B cell (primary cell): ENCODE measurements at regions of chr9 and their contacts with region 1.

Region 1: DNA sequence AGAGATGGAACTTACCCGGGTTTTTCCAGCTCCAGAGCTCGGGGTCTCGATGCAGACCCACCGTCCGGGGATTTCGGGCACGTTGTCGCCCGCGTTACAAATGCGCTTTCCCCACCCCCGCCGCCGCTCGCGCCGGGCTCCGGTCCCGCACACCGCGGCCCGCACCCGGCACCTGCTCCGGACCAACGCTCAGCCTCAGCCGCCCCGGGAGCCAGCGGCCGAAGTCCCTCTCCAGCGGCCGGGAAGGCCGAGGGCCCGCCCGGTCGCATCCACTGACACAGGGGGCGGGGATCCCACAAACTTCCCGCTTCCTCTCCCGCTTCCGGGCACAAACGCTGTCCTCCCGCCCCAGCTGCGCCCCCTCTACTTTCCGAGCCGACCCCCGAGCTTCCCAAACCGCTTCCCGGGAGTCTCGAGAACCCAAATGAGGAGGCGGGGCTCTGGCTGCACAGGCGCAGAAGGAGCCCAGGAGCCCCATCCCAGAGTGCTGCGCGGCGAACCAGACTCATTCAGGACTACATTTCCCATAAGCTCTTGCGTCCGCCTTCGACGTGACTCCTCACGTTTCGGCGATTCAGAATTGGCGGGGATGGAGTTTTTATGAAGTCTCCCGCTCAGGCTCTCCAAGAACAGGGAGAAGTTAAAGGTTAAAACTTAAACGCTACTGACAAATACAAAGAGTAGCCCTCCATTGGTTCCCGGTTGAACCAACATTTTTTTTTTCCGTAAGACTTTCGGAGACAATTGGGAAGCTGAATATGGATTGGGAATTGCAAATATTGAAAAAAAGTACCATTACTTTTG is at the start of gene ZNF782:
- DNase-seq: peak; percentile 89
- ATAC-seq: peak; percentile 93
- H3K4me3 ChIP-seq: peak within 1 kb of the TSS; percentile 84 to 100 (median 89)
- H3K4me3 Mint-ChIP-seq: peak within 1 kb of the TSS; percentile 98
- H3K27ac ChIP-seq: peak within 1 kb of the TSS; percentile 56 to 82
- H3K27ac Mint-ChIP-seq: peak within 1 kb of the TSS; percentile 97
- H3K4me1 ChIP-seq: peaks cover 12 to 18% of the 10 kb centered on the region in 2 donors
- H3K4me1 Mint-ChIP-seq: peaks cover 39% of the 10 kb centered on the region
- H3K27me3 ChIP-seq: peaks cover 0 to 7% (median 0%) of the 10 kb centered on the region in 4 experiments
- H3K27me3 Mint-ChIP-seq: peaks cover 5% of the 10 kb centered on the region
- CTCF ChIP-seq: no peak
- total RNA-seq, gene ZNF782: 14.6 and 16.3 TPM in 2 replicates

Region 2: DNA sequence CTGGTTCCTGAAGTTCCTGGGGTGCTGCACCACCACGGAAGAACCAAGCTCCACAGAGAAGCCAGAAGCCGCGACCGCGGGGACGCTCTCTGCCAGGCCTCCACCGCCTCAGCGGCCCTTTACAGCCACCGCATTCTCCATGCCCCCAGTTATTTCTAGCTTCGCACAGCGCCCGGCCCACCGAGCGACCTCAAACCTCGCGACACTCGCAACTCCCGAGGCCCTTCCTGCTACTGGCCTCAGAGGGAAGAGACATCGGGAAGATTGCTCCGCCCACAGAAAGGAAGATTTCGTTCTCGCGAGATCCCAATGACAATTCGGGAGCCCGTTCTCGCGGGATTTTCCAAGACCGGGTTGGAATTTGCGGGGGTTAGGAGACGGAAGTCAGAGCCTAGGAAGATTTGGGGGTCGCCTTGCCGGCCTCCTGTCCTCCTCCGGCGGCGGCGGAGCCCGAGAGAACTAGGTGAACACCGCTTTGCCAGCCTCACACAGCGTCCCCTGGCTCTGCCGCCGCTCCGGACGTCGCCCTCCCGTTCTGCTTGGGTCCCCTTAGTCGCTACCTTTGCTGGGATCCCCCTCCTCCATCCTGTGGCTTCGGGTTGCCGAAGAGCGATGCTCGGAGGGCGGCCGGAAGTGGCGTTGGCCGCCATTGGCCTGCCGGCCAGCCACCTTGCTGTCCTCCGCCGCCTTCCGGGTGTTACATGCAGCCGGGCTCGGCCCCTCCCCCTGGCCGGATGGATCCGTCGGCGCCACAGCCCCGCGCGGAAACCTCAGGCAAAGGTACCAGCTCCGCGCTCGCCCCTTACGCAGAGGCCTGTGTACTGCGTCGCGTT is 978.8 kb before region 1 on chr9 and contains the start of gene ERCC6L2:
- CTCF ChIA-PET with region 1: no interaction called
- POLR2A ChIA-PET with region 1: no interaction called
- intact Hi-C with region 1: loop called (anchors 2 kb)
- DNase-seq: peak; percentile 96
- ATAC-seq: peak; percentile 89
- H3K4me3 ChIP-seq: peak within 1 kb of the TSS in 2 of 5 experiments; percentile 76 to 82
- H3K4me3 Mint-ChIP-seq: no peak within 1 kb of the TSS
- H3K27ac ChIP-seq: no peak within 1 kb of the TSS
- H3K27ac Mint-ChIP-seq: no peak within 1 kb of the TSS
- H3K4me1 ChIP-seq: peaks cover 8 to 11% of the 10 kb centered on the region in 2 donors
- H3K4me1 Mint-ChIP-seq: peaks cover 23% of the 10 kb centered on the region
- H3K27me3 ChIP-seq: no peaks in the 10 kb centered on the region
- H3K27me3 Mint-ChIP-seq: no peaks in the 10 kb centered on the region
- CTCF ChIP-seq: no peak
- total RNA-seq, gene ERCC6L2: 52.0 and 54.4 TPM in 2 replicates

Region 3: GRCh38 chr9:96566498-96567207 is 287.6 kb before region 1 on chr9:
- CTCF ChIA-PET with region 1: no interaction called
- POLR2A ChIA-PET with region 1: no interaction called
- intact Hi-C with region 1: loop called (anchors 10 kb)
- DNase-seq: peak; percentile 89
- ATAC-seq: peak; percentile 91
- H3K4me3 ChIP-seq: peak overlapping the region; percentile 36 to 88 (median 74)
- H3K4me3 Mint-ChIP-seq: peak overlapping the region; percentile 92
- H3K27ac ChIP-seq: peak overlapping the region; percentile 84 to 94
- H3K27ac Mint-ChIP-seq: peak overlapping the region; percentile 92
- H3K4me1 ChIP-seq: peaks cover 11 to 15% of the 10 kb centered on the region in 2 donors
- H3K4me1 Mint-ChIP-seq: peaks cover 18% of the 10 kb centered on the region
- H3K27me3 ChIP-seq: no peaks in the 10 kb centered on the region
- H3K27me3 Mint-ChIP-seq: peaks cover 7% of the 10 kb centered on the region
- CTCF ChIP-seq: peak; percentile 82

Region 4: DNA sequence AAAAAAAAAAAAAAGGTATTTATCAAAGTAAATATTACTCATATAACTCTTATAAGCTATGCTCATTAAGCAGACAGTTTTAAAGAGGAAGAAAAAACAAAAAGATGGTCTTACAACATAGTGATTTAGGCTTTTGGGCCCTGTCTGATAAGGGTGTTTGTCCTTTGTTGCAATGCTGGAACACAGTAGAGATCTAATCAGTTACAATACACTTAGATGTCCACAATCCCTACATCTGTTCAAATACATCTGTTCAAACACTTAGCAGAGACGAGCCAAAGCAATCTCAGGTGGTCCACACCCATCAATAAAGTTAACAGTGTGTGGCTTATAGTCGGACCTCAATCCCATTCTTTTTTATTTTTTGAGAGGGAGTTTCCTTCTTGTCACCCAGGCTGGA is 210.1 kb before region 1 on chr9:
- CTCF ChIA-PET with region 1: no interaction called
- POLR2A ChIA-PET with region 1: no interaction called
- intact Hi-C with region 1: no loop called
- DNase-seq: no peak
- ATAC-seq: no peak
- H3K4me3 ChIP-seq: no peak overlapping the region
- H3K4me3 Mint-ChIP-seq: no peak overlapping the region
- H3K27ac ChIP-seq: no peak overlapping the region
- H3K27ac Mint-ChIP-seq: no peak overlapping the region
- H3K4me1 ChIP-seq: peaks cover 0 to 5% of the 10 kb centered on the region in 2 donors
- H3K4me1 Mint-ChIP-seq: peaks cover 5% of the 10 kb centered on the region
- H3K27me3 ChIP-seq: no peaks in the 10 kb centered on the region
- H3K27me3 Mint-ChIP-seq: no peaks in the 10 kb centered on the region
- CTCF ChIP-seq: no peak

Region 5: DNA sequence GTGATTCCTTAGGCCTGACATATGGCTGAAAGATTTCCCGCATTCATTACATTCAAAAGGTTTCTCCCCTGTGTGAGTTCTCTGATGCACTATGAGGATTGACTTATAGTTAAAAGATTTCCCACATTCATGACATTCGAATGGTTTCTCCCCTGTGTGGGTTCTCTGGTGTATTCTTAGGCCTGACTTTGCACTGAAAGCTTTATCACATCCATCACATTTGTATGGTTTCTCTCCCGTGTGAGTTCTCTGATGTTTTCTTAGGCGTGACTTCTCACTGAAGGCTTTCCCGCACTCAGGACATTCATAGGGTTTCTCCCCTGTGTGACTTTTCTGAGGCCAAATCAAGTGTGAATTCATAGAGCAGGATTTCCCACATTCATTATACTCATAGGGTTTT is 35.7 kb before region 1 on chr9:
- CTCF ChIA-PET with region 1: no interaction called
- POLR2A ChIA-PET with region 1: no interaction called
- intact Hi-C with region 1: no loop called
- DNase-seq: no peak
- ATAC-seq: no peak
- H3K4me3 ChIP-seq: no peak overlapping the region
- H3K4me3 Mint-ChIP-seq: no peak overlapping the region
- H3K27ac ChIP-seq: no peak overlapping the region
- H3K27ac Mint-ChIP-seq: no peak overlapping the region
- H3K4me1 ChIP-seq: no peaks in the 10 kb centered on the region
- H3K4me1 Mint-ChIP-seq: no peaks in the 10 kb centered on the region
- H3K27me3 ChIP-seq: no peaks in the 10 kb centered on the region
- H3K27me3 Mint-ChIP-seq: no peaks in the 10 kb centered on the region
- CTCF ChIP-seq: no peak

Region 6: DNA sequence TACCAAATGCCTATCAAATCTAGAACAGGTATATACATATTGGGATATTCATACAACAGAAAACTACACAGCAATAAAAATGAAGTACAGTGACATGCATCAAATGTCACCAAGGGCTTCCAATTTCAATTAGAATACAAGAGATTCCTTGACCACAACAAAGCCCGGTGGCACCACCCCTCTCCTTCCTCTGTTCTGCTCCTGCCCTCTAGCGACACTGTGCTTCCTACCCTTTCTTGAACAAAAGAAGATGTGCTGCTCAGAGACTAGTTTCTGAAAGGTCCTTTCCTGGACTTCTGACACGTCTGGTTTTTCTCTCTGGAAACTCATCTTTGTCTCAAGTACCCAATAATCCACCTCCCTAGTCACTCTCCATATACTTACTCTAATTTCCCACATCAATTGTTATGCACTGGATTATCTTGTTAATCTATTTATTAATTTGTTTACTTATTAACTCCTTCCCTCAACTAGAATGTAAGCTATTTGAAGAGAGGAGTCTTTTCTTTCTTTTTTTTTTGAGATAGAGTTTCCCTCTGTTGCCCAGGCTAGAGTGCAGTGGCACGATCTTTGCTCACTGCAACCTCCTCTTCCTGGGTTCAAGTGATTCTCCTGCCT is 255.0 kb after region 1 on chr9:
- CTCF ChIA-PET with region 1: interaction called, 7 read pairs
- POLR2A ChIA-PET with region 1: no interaction called
- intact Hi-C with region 1: loop called (anchors 5 kb)
- DNase-seq: no peak
- ATAC-seq: no peak
- H3K4me3 ChIP-seq: no peak overlapping the region
- H3K4me3 Mint-ChIP-seq: no peak overlapping the region
- H3K27ac ChIP-seq: no peak overlapping the region
- H3K27ac Mint-ChIP-seq: no peak overlapping the region
- H3K4me1 ChIP-seq: no peaks in the 10 kb centered on the region
- H3K4me1 Mint-ChIP-seq: no peaks in the 10 kb centered on the region
- H3K27me3 ChIP-seq: peaks cover 0 to 4% (median 0%) of the 10 kb centered on the region in 4 experiments
- H3K27me3 Mint-ChIP-seq: peaks cover 11% of the 10 kb centered on the region
- CTCF ChIP-seq: no peak

Region 7: DNA sequence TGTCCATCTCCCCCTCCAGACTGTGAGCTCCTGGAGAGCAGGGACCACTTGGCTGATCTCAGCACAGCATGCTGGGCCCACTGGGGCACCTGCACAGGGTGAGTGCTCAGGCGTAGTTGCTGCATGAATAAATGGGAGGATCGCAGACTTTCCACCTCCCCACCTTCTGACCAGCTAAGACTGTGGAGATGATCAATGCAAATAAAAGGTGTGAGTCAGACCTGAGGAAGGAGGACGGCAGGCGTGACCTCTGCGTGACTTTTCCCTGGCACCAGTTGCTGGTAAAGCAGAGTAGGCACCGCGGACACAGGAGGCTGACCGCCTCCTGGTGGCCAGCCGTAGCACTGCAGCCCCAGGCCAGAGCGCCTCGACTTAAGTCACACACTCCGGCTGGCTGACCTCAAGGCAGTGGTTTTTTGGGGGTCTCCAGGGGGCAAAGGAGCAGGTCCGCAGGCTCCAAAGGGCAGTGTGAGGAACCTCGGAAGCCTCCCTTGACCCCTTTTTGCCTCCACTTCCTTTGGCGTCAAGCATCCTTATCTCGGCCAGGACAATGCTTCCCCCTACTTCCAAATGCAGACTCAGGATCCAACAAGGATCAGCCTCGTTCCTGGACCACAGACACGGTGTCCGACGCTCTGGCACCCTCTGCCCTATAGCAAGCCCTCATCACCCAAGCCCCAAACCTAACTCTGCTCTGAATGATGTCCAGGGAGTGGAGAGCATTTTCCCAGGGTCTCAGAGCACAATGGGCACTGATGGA is 544.9 kb after region 1 on chr9:
- CTCF ChIA-PET with region 1: interaction called, 82 read pairs
- POLR2A ChIA-PET with region 1: no interaction called
- intact Hi-C with region 1: no loop called
- DNase-seq: peak; percentile 77
- ATAC-seq: peak; percentile 90
- H3K4me3 ChIP-seq: no peak overlapping the region
- H3K4me3 Mint-ChIP-seq: no peak overlapping the region
- H3K27ac ChIP-seq: no peak overlapping the region
- H3K27ac Mint-ChIP-seq: no peak overlapping the region
- H3K4me1 ChIP-seq: no peaks in the 10 kb centered on the region
- H3K4me1 Mint-ChIP-seq: no peaks in the 10 kb centered on the region
- H3K27me3 ChIP-seq: peaks cover 0 to 8% (median 0%) of the 10 kb centered on the region in 4 experiments
- H3K27me3 Mint-ChIP-seq: peaks cover 6% of the 10 kb centered on the region
- CTCF ChIP-seq: peak; percentile 98

Region 8: DNA sequence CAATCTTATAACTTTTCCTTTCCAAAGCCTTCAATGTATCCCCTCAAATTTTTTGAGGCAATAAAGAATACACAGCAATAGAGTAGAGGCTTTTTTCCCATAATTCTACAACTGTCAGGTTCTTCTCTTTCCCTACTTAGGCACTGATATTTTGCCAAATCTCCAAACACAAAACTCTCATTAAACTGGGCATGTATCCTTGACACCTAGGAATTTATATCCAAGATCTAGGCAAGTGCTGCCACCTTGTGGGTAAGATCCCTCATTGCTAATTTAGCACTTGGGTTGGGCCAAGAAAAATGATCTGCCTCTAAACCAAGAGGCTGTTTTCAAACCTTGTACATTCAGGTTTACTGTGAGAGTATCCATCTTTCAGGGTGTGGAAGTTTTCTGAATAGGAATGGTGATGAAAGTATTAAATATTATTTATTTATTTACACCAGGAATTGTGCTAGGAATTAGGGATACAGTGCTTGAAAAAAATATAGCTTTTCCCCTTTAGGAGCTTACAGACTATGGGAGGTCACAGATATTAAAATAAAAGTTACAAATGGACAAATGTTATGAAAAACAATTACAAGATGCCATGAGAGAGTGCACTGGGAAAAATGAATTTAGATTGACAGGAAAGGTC is 761.3 kb after region 1 on chr9:
- CTCF ChIA-PET with region 1: interaction called, 31 read pairs
- POLR2A ChIA-PET with region 1: no interaction called
- intact Hi-C with region 1: loop called (anchors 1 kb)
- DNase-seq: peak; percentile 68
- ATAC-seq: peak; percentile 49
- H3K4me3 ChIP-seq: no peak overlapping the region
- H3K4me3 Mint-ChIP-seq: no peak overlapping the region
- H3K27ac ChIP-seq: no peak overlapping the region
- H3K27ac Mint-ChIP-seq: no peak overlapping the region
- H3K4me1 ChIP-seq: no peaks in the 10 kb centered on the region
- H3K4me1 Mint-ChIP-seq: peaks cover 8% of the 10 kb centered on the region
- H3K27me3 ChIP-seq: no peaks in the 10 kb centered on the region
- H3K27me3 Mint-ChIP-seq: no peaks in the 10 kb centered on the region
- CTCF ChIP-seq: peak; percentile 95